BJ (cell line): ENCODE measurements at regions of chr3 and their contacts with region 1.

Region 1: DNA sequence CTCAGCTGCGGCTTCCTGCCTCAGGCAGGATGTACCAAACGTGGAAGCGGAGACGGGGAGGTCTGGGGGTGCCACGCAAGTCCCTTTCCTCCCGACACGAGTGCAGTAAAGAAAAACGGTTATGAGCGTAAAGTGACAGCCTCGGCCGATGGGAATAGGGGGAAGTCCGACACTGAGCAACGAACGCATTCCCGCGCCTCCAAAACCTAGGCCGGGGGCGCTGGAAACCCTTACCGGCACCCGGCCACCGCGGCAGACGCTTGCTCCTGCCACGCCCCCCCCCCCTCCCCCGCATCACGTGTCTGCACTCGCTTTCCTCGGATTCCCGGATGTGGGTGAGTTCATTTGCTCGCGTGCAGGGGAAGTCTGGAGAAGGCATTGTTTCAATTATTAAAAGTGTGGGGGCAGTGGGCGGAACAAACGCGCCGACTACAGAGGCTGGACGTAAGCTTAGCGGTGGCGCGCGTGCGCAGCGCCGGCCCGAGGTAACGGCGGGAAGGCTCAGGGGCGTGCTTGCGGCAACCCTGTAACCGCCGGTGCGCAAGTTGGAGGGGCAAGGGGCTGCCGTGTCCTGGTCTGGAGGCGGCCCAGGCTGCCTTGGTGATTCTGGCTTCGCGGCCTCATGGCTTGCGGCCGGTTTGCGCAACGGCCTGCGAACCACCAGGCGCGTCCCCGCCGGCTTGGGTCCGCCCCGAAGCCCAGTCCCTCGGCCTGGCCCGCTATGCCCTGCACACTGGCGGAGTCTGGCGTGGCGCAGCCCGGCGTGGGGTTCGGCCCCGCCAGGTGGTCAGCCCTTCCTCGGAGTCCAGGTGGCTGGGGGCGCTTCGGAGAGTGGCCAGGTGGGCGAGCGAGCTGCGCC is at the starts of genes ANAPC13 and CEP63:
- DNase-seq: peak; percentile 98
- H3K4me3 ChIP-seq: peak within 1 kb of the TSS; percentile 85
- H3K27me3 ChIP-seq: no peaks in the 10 kb centered on the region
- CTCF ChIP-seq: no peak
- polyA plus RNA-seq, gene ANAPC13: 54.6 and 115 TPM in 2 replicates
- polyA plus RNA-seq, gene CEP63: 6.4 and 14.5 TPM in 2 replicates

Region 2: GRCh38 chr3:134373994-134374790 is 111.8 kb before region 1 on chr3 and contains the start of gene AMOTL2:
- CTCF ChIA-PET with region 1: interaction called, 10 read pairs
- POLR2A ChIA-PET with region 1: interaction called, 6 read pairs
- DNase-seq: peak; percentile 86
- H3K4me3 ChIP-seq: peak within 1 kb of the TSS; percentile 97
- H3K27me3 ChIP-seq: no peaks in the 10 kb centered on the region
- CTCF ChIP-seq: no peak
- polyA plus RNA-seq, gene AMOTL2: 122 and 199 TPM in 2 replicates